K562 (cell line): ENCODE measurements at regions of chr18 and their contacts with region 1.

Region 1: GRCh38 chr18:56645415-56646016 is 5.6 kb upstream of the WDR7 start:
- DNase-seq: peak in 1 of 4 experiments; percentile 26
- ATAC-seq: no peak
- H3K4me3 ChIP-seq: no peak overlapping the region
- H3K27ac ChIP-seq: no peak overlapping the region
- H3K4me1 ChIP-seq: peaks cover 0 to 20% of the 10 kb centered on the region in 2 experiments; a peak in 4 of 5 replicates
- H3K27me3 ChIP-seq: no peaks in the 10 kb centered on the region
- CTCF ChIP-seq: peak in 2 of 3 experiments; percentile 41 to 59; a peak in 3 of 6 replicates
- EP300 ChIP-seq: no peak
- POLR2A ChIP-seq: no peak
- RAD21 ChIP-seq: peak in 1 of 2 experiments; percentile 26; a peak in 1 of 4 replicates

Region 2: GRCh38 chr18:56458770-56459712 is 186.5 kb before region 1 on chr18:
- CTCF ChIA-PET with region 1: no interaction called
- POLR2A ChIA-PET with region 1: no interaction called
- in situ Hi-C with region 1: no loop called
- intact Hi-C with region 1: no loop called
- DNase-seq: no peak
- ATAC-seq: no peak
- H3K4me3 ChIP-seq: no peak overlapping the region
- H3K27ac ChIP-seq: no peak overlapping the region
- H3K4me1 ChIP-seq: no peaks in the 10 kb centered on the region
- H3K27me3 ChIP-seq: no peaks in the 10 kb centered on the region
- CTCF ChIP-seq: no peak
- EP300 ChIP-seq: no peak
- POLR2A ChIP-seq: no peak
- RAD21 ChIP-seq: no peak

Region 3: DNA sequence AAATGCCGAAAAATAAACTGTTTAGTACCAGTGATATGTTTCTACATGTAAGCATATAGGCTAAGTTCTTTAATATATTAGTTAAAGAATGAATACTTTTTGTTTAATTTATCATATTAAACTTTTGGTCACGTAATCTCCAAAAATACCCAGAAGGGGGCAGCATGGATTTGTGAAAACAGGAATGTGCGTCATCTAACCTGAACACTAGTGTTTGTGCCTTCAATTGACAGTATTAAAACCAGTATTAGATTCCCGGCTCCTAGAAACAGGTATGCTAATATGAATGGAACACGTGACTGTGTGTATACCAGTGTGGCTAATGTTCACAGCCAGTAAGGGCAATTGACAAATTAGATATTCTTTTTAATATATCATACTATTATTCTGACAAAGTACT is 57.4 kb after region 1 on chr18:
- CTCF ChIA-PET with region 1: no interaction called
- POLR2A ChIA-PET with region 1: no interaction called
- in situ Hi-C with region 1: no loop called
- intact Hi-C with region 1: loop called (anchors 5 kb)
- DNase-seq: peak; percentile 11 to 47 (median 12)
- ATAC-seq: 0 out of 3 replicates have a peak, but pooled peaks have one; percentile 37
- H3K4me3 ChIP-seq: no peak overlapping the region
- H3K27ac ChIP-seq: no peak overlapping the region
- H3K4me1 ChIP-seq: no peaks in the 10 kb centered on the region
- H3K27me3 ChIP-seq: no peaks in the 10 kb centered on the region
- CTCF ChIP-seq: peak; percentile 18 to 57 (median 45); a peak in 3 of 6 replicates
- EP300 ChIP-seq: no peak
- POLR2A ChIP-seq: no peak
- RAD21 ChIP-seq: peak; percentile 23 to 43; a peak in 2 of 4 replicates

Region 4: DNA sequence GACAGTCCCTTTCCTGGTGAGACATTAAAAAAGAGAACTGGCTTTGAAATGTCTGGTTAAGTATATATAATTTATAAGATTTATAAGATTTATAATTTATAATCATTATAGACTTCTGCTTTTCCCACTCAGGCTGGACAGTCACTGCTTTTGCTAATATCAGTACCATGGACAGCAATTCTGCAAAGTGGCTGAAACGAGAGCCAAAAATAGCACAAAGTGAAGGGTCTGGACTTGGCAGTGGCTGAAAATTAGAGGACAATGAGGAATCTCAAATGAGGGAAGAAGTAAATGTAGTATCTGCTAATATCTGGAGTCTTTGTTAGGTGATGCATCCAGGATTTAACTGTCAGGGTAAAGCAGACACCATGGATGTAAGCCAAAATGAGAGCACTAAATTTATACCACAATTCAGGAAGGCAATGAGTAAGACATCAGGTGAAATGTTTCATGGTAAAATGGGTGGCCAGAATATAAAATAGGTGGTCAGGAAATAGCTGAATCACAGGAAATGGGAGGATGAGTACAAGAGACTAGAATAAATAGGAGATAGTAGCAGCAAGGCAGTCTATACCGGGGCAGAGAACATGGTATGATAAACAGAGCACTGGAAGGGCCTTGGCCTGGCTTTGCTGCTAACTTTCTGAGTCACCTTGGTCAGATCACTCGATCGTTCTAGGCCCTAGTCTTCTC is 461.8 kb after region 1 on chr18:
- CTCF ChIA-PET with region 1: no interaction called
- POLR2A ChIA-PET with region 1: no interaction called
- in situ Hi-C with region 1: no loop called
- intact Hi-C with region 1: no loop called
- DNase-seq: peak in 3 of 4 experiments; percentile 16 to 32 (median 25)
- ATAC-seq: no peak
- H3K4me3 ChIP-seq: no peak overlapping the region
- H3K27ac ChIP-seq: no peak overlapping the region
- H3K4me1 ChIP-seq: no peaks in the 10 kb centered on the region
- H3K27me3 ChIP-seq: no peaks in the 10 kb centered on the region
- CTCF ChIP-seq: no peak
- EP300 ChIP-seq: no peak
- POLR2A ChIP-seq: no peak
- RAD21 ChIP-seq: no peak